Activated CD4-positive, alpha-beta T cell treated with anti-CD3 and anti-CD28 coated beads, Interleukin-2, amount 10 ng/mL, durations not matched to agents 24 days and 14 days (primary cell): ENCODE measurements at regions of chr9 and their contacts with region 1.

Region 1: DNA sequence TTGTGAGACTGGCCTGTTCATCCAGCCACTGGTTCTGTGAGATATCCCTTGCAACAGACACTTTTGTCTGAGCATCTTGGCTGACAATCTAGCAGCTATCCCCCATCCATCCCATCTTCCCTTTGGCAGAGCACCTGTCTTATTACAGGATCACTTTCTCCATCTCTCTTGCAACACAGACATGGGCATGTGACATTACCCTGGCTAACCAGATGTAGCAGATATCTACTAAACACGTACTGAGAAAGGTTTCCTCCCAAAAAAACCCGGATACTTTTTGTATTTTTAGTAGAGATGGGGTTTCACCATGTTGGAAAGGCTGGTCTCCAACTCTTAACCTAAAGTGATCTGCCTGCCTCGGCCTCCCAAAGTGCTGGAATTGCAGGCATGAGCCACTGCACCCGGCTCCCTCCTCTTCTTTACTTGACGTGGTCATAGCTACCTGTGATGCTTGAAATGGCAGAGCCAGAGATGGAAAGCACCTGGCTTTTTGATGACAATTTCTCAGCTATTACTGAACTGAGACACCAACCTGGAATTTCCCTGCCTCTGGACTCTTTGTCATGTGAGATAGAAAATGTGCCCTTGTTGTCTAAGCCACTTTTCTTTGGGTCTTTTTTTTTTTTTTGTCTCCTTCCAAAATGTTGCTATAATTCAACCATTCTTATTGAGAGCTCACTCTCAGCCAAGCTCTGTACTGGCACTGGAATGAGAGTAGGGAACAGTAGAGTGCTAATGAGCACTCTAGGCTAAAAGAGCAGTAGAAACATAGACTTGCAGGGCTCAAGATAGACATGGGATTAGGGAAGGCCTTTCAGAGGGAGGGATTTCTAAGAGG is 32.6 kb downstream of the FNBP1 start:
- DNase-seq: peak; percentile 79
- H3K4me3 Mint-ChIP-seq: peak overlapping the region; percentile 66
- H3K27ac Mint-ChIP-seq: peak overlapping the region; percentile 93
- H3K4me1 Mint-ChIP-seq: peaks cover 59% of the 10 kb centered on the region
- H3K27me3 Mint-ChIP-seq: no peaks in the 10 kb centered on the region

Region 2: GRCh38 chr9:129988607-129989361 is 21.6 kb before region 1 on chr9:
- intact Hi-C with region 1: loop called (anchors 1 kb)
- DNase-seq: peak; percentile 66
- H3K4me3 Mint-ChIP-seq: peak overlapping the region; percentile 31
- H3K27ac Mint-ChIP-seq: peak overlapping the region; percentile 92
- H3K4me1 Mint-ChIP-seq: peaks cover 49% of the 10 kb centered on the region
- H3K27me3 Mint-ChIP-seq: no peaks in the 10 kb centered on the region

Region 3: DNA sequence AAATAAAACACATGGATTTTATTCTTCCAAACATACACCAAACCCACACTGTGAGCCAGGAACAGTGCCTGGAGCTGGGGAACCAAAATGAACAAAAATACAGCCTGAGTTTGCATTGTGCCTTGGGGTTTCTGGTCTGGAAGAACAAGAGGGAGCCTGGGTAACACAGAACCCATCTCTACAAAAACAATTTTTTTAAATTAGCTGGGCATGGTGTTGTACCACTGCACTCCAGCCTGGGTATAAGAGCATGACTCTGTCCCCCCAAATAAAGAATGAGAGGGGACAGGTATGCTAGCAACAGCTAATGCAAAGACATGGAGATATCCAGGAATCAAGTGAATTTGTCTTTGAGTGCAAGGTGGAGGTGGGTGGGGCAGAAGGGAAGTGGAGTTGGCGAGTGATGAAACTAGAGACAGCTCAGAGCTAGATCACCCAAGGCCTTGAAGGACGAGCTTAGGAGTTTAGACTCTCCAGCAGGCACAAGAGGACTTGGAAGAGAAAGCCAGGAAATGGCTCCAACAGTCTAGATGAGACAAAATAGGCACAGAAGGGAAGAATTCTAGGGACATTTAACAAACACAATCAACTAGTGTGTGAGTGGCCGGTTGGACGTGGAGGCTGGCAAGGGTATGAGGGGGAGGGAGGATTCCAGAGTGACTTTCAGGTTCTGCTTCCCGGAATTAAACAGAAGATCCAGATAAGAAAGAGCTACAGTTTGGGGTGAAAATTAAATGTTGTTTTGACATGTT is 14.8 kb before region 1 on chr9:
- intact Hi-C with region 1: loop called (anchors 1 kb)
- DNase-seq: peak; percentile 77
- H3K4me3 Mint-ChIP-seq: peak overlapping the region; percentile 75
- H3K27ac Mint-ChIP-seq: peak overlapping the region; percentile 95
- H3K4me1 Mint-ChIP-seq: peaks cover 56% of the 10 kb centered on the region
- H3K27me3 Mint-ChIP-seq: no peaks in the 10 kb centered on the region

Region 4: GRCh38 chr9:130029223-130029973 is 19.0 kb after region 1 on chr9:
- intact Hi-C with region 1: loop called (anchors 2 kb)
- DNase-seq: peak; percentile 75
- H3K4me3 Mint-ChIP-seq: peak overlapping the region; percentile 71
- H3K27ac Mint-ChIP-seq: peak overlapping the region; percentile 92
- H3K4me1 Mint-ChIP-seq: peaks cover 74% of the 10 kb centered on the region
- H3K27me3 Mint-ChIP-seq: no peaks in the 10 kb centered on the region